CD4-positive, alpha-beta memory T cell (primary cell): ENCODE measurements at regions of chr12 and their contacts with region 1.

Region 1: DNA sequence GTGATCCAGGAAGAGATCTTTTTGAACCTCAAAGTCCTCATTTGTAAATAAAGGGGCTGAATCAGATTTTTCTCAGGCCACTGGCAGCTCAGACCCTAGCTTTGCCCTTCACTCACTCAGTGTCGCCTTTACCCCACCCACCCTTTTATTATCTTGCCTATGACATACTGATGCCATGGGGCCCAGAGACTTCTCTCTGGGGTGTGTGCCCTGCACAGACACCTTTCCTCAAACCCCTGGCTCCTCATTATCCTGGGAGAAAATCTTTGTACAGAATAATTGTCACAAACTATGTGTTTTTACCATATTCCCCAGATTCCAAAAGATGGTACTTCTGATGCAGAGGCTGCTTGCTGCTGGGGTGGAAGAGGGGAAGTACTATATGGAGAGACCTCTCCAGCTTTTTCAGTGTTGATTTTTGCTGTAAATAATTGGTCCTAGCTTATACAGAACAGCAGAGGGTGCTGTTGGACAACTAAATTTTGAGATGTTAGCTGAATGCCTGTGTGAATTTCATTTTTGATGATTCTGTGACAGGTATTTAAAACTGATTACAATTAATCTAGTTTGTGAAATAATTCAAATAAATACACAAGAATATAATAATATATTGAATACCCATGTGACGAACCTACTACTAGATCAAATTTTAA is 53.9 kb upstream of the DCD start:
- DNase-seq: peak in 4 of 5 donors; percentile 48 to 55 (median 54)
- H3K4me3 ChIP-seq: no peak overlapping the region
- H3K4me3 Mint-ChIP-seq: no peak overlapping the region
- H3K27ac ChIP-seq: no peak overlapping the region
- H3K27ac Mint-ChIP-seq: no peak overlapping the region
- H3K4me1 ChIP-seq: no peaks in the 10 kb centered on the region
- H3K4me1 Mint-ChIP-seq: no peaks in the 10 kb centered on the region
- H3K27me3 ChIP-seq: no peaks in the 10 kb centered on the region
- H3K27me3 Mint-ChIP-seq: peaks cover 5 to 6% of the 10 kb centered on the region in 2 donors

Region 2: GRCh38 chr12:54475537-54475936 is 226.5 kb before region 1 on chr12:
- CTCF ChIA-PET with region 1: no interaction called
- POLR2A ChIA-PET with region 1: no interaction called
- intact Hi-C with region 1: no loop called
- DNase-seq: no peak
- H3K4me3 ChIP-seq: no peak overlapping the region
- H3K4me3 Mint-ChIP-seq: no peak overlapping the region
- H3K27ac ChIP-seq: no peak overlapping the region
- H3K27ac Mint-ChIP-seq: no peak overlapping the region
- H3K4me1 ChIP-seq: no peaks in the 10 kb centered on the region
- H3K4me1 Mint-ChIP-seq: no peaks in the 10 kb centered on the region
- H3K27me3 ChIP-seq: no peaks in the 10 kb centered on the region
- H3K27me3 Mint-ChIP-seq: peaks cover 7 to 10% of the 10 kb centered on the region in 2 donors

Region 3: DNA sequence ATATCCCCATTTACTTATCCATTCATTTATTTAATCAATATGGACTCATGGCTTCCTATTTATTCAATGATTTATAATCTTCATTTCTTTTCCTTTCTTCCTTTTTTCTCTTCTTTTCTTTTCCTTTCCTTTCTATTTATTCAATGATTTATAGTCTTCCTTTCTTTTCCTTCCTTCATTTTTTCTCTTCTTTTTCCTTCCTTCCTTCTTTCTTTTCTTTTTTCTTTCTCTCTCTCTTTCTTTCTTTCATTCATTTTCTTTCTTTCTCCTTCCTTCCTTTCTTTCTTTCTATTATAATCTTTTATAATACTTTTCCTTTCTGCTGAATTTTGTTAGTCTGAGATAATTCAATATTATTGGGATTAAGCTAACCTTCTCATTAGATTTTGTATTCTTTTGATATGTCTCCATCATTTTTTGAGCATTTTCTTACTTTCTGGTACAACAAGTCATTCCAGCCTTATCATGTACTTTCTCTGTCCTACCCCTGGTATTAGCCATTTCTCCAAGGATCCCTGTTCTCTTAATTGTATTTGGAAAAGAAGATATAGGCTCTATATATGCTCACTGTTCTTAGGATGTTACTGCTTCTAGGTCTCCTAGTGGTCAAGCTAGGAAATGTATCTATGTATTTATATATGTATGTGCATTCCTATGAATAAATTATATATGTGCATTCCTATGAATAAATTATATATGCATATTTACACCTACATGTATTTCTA is 79.4 kb before region 1 on chr12:
- CTCF ChIA-PET with region 1: no interaction called
- POLR2A ChIA-PET with region 1: no interaction called
- intact Hi-C with region 1: no loop called
- DNase-seq: no peak
- H3K4me3 ChIP-seq: no peak overlapping the region
- H3K4me3 Mint-ChIP-seq: no peak overlapping the region
- H3K27ac ChIP-seq: no peak overlapping the region
- H3K27ac Mint-ChIP-seq: no peak overlapping the region
- H3K4me1 ChIP-seq: no peaks in the 10 kb centered on the region
- H3K4me1 Mint-ChIP-seq: peaks cover 0 to 10% (median under 1%) of the 10 kb centered on the region in 4 donors
- H3K27me3 ChIP-seq: peaks cover 16% of the 10 kb centered on the region
- H3K27me3 Mint-ChIP-seq: peaks cover 40 to 47% of the 10 kb centered on the region in 2 donors

Region 4: GRCh38 chr12:54824402-54824801 is 122.3 kb after region 1 on chr12:
- CTCF ChIA-PET with region 1: no interaction called
- POLR2A ChIA-PET with region 1: no interaction called
- intact Hi-C with region 1: no loop called
- DNase-seq: no peak
- H3K4me3 ChIP-seq: no peak overlapping the region
- H3K4me3 Mint-ChIP-seq: no peak overlapping the region
- H3K27ac ChIP-seq: no peak overlapping the region
- H3K27ac Mint-ChIP-seq: no peak overlapping the region
- H3K4me1 ChIP-seq: no peaks in the 10 kb centered on the region
- H3K4me1 Mint-ChIP-seq: no peaks in the 10 kb centered on the region
- H3K27me3 ChIP-seq: no peaks in the 10 kb centered on the region
- H3K27me3 Mint-ChIP-seq: peaks cover 4 to 10% of the 10 kb centered on the region in 2 donors

Region 5: GRCh38 chr12:55142669-55143565 is 440.9 kb after region 1 on chr12:
- CTCF ChIA-PET with region 1: interaction called, 11 read pairs
- POLR2A ChIA-PET with region 1: no interaction called
- intact Hi-C with region 1: loop called (anchors 1 kb)
- DNase-seq: peak in 4 of 5 donors; percentile 17 to 33 (median 26)
- H3K4me3 ChIP-seq: no peak overlapping the region
- H3K4me3 Mint-ChIP-seq: no peak overlapping the region
- H3K27ac ChIP-seq: no peak overlapping the region
- H3K27ac Mint-ChIP-seq: no peak overlapping the region
- H3K4me1 ChIP-seq: no peaks in the 10 kb centered on the region
- H3K4me1 Mint-ChIP-seq: peaks cover 0 to 5% (median 2%) of the 10 kb centered on the region in 4 donors
- H3K27me3 ChIP-seq: no peaks in the 10 kb centered on the region
- H3K27me3 Mint-ChIP-seq: peaks cover 5 to 6% of the 10 kb centered on the region in 2 donors